PC-3 (cell line): ENCODE measurements at regions of chr3 and their contacts with region 1.

Region 1: GRCh38 chr3:143783851-143784370 is 64.4 kb downstream of the SLC9A9 start:
- DNase-seq: no peak
- ATAC-seq: no peak; the same call in 1 of the 2 replicates
- H3K4me3 ChIP-seq: no peak overlapping the region
- H3K27ac ChIP-seq: no peak overlapping the region
- H3K4me1 ChIP-seq: no peaks in the 10 kb centered on the region
- H3K27me3 ChIP-seq: no peaks in the 10 kb centered on the region
- CTCF ChIP-seq: no peak

Region 2: DNA sequence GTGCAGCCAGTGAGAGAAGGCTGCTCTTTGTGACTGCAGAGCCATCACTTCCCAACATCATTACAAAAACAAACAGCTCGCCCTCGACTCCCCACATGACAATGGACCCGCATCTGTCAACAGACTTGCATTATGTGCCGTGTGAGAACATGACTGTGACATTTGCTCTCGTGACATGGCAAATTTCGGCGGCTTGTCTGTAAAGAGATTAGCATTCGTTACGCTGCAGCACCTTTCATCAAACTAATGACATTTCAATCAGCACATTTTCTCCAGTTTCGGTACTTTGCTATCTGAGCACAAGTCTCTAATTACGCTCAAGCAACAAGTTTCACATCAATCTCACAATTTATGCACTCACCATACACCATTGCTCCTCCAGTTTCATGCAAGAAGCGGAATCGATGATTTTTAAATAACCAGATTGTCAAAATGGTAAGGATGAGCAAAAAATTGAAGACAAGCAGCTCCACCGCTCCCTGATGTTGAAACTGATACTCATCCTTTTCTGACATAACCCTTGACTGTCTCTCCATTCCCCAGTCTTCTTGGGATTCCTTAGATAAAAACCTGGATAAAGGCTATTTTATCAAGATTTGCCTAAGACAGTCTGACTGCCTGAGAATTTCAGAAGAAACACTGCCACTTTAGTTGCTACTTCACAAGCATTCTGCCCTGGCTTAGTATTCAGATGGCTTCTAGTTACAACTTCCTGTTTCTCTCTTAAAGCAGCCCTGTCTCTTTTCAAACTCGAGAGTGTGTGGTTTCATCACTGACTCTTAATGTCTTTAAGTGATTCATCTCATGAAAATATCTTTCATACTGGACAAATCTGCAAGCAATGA is 64.1 kb after region 1 on chr3 and contains the start of gene SLC9A9:
- CTCF ChIA-PET with region 1: no interaction called
- POLR2A ChIA-PET with region 1: no interaction called
- intact Hi-C with region 1: loop called (anchors 5 kb)
- DNase-seq: peak; percentile 45
- ATAC-seq: peak; percentile 93
- H3K4me3 ChIP-seq: peak within 1 kb of the TSS; percentile 63
- H3K27ac ChIP-seq: no peak within 1 kb of the TSS
- H3K4me1 ChIP-seq: no peaks in the 10 kb centered on the region
- H3K27me3 ChIP-seq: no peaks in the 10 kb centered on the region
- CTCF ChIP-seq: no peak
- total RNA-seq, gene SLC9A9: 0.07 TPM in 1 of 2 replicates, not detected in the other